Dorsolateral prefrontal cortex (tissue), 120 donors: ENCODE measurements at regions of chr11 and their contacts with region 1.

Region 1: DNA sequence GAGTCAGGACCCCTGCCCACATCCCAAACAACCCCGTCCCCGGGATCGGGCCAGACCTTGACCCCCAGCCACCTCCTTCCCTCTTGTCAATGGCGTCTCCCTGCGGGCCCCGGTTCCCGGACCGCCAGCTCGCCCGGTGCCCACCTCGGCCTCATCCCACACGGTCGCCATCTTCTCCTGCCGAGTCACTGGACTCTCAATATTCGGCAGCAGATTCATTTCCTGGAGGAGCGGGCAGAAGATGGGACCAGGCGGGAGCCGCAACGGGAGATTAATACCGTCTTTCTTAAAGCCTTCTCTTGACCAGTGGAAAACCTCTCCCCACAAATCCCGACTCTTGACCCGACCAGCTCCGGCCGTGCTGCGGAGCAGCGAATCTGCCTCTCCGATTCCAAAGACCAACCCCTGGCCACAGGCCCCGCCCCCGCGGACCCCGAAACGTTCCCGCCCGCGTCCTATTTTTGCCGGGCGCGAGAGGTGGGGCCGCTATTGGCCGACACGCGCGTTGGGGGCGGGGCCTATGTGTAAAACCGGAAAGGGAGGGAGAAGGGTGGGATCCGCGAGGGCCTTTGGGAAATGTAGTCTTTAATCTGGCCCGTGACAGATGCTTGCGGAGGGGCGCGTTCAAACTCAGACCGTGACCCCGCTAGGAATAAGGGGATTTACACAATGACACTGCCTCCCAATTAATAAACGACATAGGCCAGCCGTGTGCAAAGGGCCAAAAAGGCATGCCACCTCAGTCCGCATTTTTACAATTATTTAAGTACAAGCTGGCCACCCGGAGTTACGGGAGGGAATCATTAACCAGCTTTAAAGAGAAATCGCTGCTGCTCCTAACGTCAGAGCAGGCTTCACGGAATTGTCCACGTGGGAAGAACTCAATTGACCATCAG is at the start of gene PSMC3:
- DNase-seq: peak; percentile 97 to 99 (median 98)
- H3K4me3 ChIP-seq: peak within 1 kb of the TSS; percentile 57 to 100 (median 93)
- H3K27ac ChIP-seq: peak within 1 kb of the TSS; percentile 68 to 99 (median 94)
- H3K27me3 ChIP-seq: no peaks in the 10 kb centered on the region
- CTCF ChIP-seq: peak in 27 of 56 donors; percentile 8 to 63 (median 25)
- total RNA-seq, gene PSMC3: 65.6 to 166 (median 113) TPM

Region 2: GRCh38 chr11:47407746-47408590 is 18.3 kb before region 1 on chr11 and contains the start of gene SLC39A13:
- intact Hi-C with region 1: loop called (anchors 1 to 2 kb)
- DNase-seq: peak; percentile 81 to 97 (median 92)
- H3K4me3 ChIP-seq: peak within 1 kb of the TSS; percentile 59 to 92 (median 80)
- H3K27ac ChIP-seq: peak within 1 kb of the TSS; percentile 83 to 99 (median 96)
- H3K27me3 ChIP-seq: no peaks in the 10 kb centered on the region
- CTCF ChIP-seq: peak; percentile 66 to 98 (median 86)
- total RNA-seq, gene SLC39A13: 29.5 to 62.3 (median 39.7) TPM

Region 3: GRCh38 chr11:47499614-47500013 is 73.3 kb after region 1 on chr11:
- intact Hi-C with region 1: no loop called
- DNase-seq: no peak
- H3K4me3 ChIP-seq: peak overlapping the region in 5 of 59 donors; percentile 1 to 29 (median 11)
- H3K27ac ChIP-seq: peak overlapping the region in 49 of 59 donors; percentile 1 to 72 (median 45)
- H3K27me3 ChIP-seq: no peaks in the 10 kb centered on the region
- CTCF ChIP-seq: no peak

Region 4: GRCh38 chr11:47758076-47758475 is 331.8 kb after region 1 on chr11:
- intact Hi-C with region 1: no loop called
- DNase-seq: no peak
- H3K4me3 ChIP-seq: no peak overlapping the region
- H3K27ac ChIP-seq: no peak overlapping the region
- H3K27me3 ChIP-seq: no peaks in the 10 kb centered on the region
- CTCF ChIP-seq: no peak